Panc1 (cell line): ENCODE measurements at regions of chr20 and their contacts with region 1.

Region 1: GRCh38 chr20:59222253-59223181 is 58.9 kb downstream of the ZNF831 start:
- DNase-seq: no peak
- ATAC-seq: peak; percentile 96
- H3K4me3 ChIP-seq: peak overlapping the region; percentile 38 to 43
- H3K27ac ChIP-seq: no peak overlapping the region
- H3K4me1 ChIP-seq: peaks cover 4% of the 10 kb centered on the region
- H3K27me3 ChIP-seq: peaks cover 55% of the 10 kb centered on the region
- CTCF ChIP-seq: peak; percentile 98

Region 2: GRCh38 chr20:59403261-59403961 is 180.9 kb after region 1 on chr20:
- CTCF ChIA-PET with region 1: no interaction called
- POLR2A ChIA-PET with region 1: no interaction called
- in situ Hi-C with region 1: no loop called
- intact Hi-C with region 1: loop called (anchors 10 kb)
- DNase-seq: no peak
- ATAC-seq: peak; percentile 70
- H3K4me3 ChIP-seq: no peak overlapping the region
- H3K27ac ChIP-seq: no peak overlapping the region
- H3K4me1 ChIP-seq: peaks cover 2% of the 10 kb centered on the region; the same call in 1 of the 2 replicates
- H3K27me3 ChIP-seq: peaks cover 35% of the 10 kb centered on the region
- CTCF ChIP-seq: peak; percentile 98